ENCODE measurements at regions of chrX and their contacts with region 1.

Region 1: GRCh38 chrX:152989292-152989658 is 4.6 kb downstream of the PNMA5 start:
- DNase-seq: no peak
- ATAC-seq: no peak
- H3K4me3 ChIP-seq: no peak overlapping the region
- H3K27ac ChIP-seq: no peak overlapping the region
- H3K4me1 ChIP-seq: no peaks in the 10 kb centered on the region
- H3K27me3 ChIP-seq: no peaks in the 10 kb centered on the region
- CTCF ChIP-seq: no peak

Region 2: GRCh38 chrX:152915527-152916241 is 73.6 kb before region 1 on chrX:
- CTCF ChIA-PET with region 1: interaction called, 14 read pairs
- POLR2A ChIA-PET with region 1: no interaction called
- in situ Hi-C with region 1: no loop called
- intact Hi-C with region 1: no loop called
- DNase-seq: peak; percentile 39
- ATAC-seq: peak; percentile 73
- H3K4me3 ChIP-seq: no peak overlapping the region
- H3K27ac ChIP-seq: no peak overlapping the region
- H3K4me1 ChIP-seq: peaks cover 9% of the 10 kb centered on the region
- H3K27me3 ChIP-seq: no peaks in the 10 kb centered on the region
- CTCF ChIP-seq: no peak

Region 3: GRCh38 chrX:153003981-153004380 is 14.7 kb after region 1 on chrX:
- CTCF ChIA-PET with region 1: no interaction called
- POLR2A ChIA-PET with region 1: no interaction called
- in situ Hi-C with region 1: no loop called
- intact Hi-C with region 1: no loop called
- DNase-seq: no peak
- ATAC-seq: no peak
- H3K4me3 ChIP-seq: no peak overlapping the region
- H3K27ac ChIP-seq: no peak overlapping the region
- H3K4me1 ChIP-seq: no peaks in the 10 kb centered on the region
- H3K27me3 ChIP-seq: no peaks in the 10 kb centered on the region; the same call in 1 of the 2 replicates
- CTCF ChIP-seq: no peak